ENCODE measurements at regions of chr3 and their contacts with region 1.

Region 1: GRCh38 chr3:159828542-159828943 is 160.1 kb upstream of the IL12A start:
- DNase-seq: peak; percentile 71
- H3K4me3 Mint-ChIP-seq: no peak overlapping the region
- H3K27ac Mint-ChIP-seq: peak overlapping the region; percentile 84
- H3K4me1 Mint-ChIP-seq: peaks cover 40% of the 10 kb centered on the region
- H3K27me3 Mint-ChIP-seq: no peaks in the 10 kb centered on the region
- CTCF ChIP-seq: peak; percentile 38

Region 2: GRCh38 chr3:159804726-159805410 is 23.7 kb before region 1 on chr3:
- CTCF ChIA-PET with region 1: interaction called, 19 read pairs
- POLR2A ChIA-PET with region 1: interaction called, 9 read pairs
- intact Hi-C with region 1: no loop called
- DNase-seq: peak; percentile 93
- H3K4me3 Mint-ChIP-seq: no peak overlapping the region
- H3K27ac Mint-ChIP-seq: no peak overlapping the region
- H3K4me1 Mint-ChIP-seq: peaks cover 32% of the 10 kb centered on the region
- H3K27me3 Mint-ChIP-seq: no peaks in the 10 kb centered on the region
- CTCF ChIP-seq: peak; percentile 91

Region 3: DNA sequence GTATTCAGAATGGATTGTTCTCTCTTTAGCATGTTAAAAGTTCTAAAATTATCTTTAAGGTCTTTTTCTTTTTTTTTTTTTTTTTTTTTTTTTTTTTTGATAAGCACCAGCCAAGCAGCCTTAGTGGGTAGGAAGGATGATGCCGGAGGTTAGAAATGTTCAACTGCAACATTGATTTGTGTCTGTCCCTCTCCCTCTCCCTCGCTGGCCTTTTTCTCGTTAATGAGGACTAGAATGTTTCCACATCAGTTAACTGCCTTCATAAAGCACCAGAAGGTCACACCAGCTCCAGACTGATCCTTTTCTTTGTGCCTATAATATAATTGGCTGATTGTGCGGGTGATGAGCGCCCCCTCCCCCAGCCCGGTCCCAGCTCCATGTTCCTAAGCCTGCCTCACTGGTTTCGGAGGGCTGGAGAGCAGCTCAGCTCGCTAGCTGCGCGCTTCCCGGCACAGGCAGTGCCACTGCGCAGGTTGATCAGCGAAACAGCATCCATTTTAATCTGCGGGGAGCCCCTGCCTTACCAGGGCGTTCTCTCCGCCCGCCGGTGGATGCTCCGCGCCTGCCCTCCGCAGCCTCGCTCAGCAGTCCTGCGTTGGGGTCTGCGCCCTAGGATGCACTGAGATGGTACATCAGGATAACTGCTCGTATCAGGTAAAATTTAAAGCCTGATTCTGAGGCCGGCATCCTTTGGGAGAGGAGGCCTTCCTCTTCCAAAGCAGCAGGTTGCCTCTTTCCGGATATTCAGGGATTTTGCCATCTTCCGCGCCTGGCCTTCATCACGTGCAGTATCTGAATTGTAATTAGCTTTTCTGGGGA is 11.2 kb after region 1 on chr3:
- CTCF ChIA-PET with region 1: interaction called, 34 read pairs
- POLR2A ChIA-PET with region 1: interaction called, 94 read pairs
- intact Hi-C with region 1: no loop called
- DNase-seq: no peak
- H3K4me3 Mint-ChIP-seq: peak within 1 kb of the TSS; percentile 66
- H3K27ac Mint-ChIP-seq: peak within 1 kb of the TSS; percentile 27
- H3K4me1 Mint-ChIP-seq: peaks cover 25% of the 10 kb centered on the region
- H3K27me3 Mint-ChIP-seq: no peaks in the 10 kb centered on the region
- CTCF ChIP-seq: no peak

Region 4: DNA sequence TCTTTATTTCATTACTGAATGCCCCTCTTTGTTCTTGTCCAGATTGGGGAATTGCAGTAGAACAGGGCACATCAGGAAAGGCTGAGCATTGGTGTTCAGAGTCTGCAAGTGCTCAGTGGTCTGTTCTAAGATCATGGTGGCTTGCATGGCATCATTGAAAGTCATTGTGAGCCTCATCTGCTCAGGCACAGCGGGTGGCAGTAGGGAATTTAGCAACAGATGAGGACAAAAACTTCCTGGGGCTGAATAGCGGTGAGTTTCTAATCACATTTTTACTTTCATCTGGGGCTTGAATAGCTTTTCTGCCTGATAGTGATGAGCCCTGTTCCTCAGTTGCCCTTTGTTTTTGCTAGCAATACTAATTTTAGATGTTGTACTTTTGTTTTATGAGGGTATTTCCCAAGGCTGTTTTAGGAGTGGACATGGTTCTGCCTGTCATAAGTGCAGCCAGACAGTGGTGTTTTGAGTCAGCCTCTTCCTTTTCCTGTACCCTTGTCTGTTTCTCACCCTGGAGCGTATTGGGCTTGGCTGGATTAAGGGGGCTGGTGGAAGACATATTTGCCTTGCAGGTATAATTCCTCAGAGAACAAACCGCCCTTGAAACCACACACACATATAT is 32.9 kb after region 1 on chr3:
- CTCF ChIA-PET with region 1: interaction called, 87 read pairs
- POLR2A ChIA-PET with region 1: interaction called, 13 read pairs
- intact Hi-C with region 1: no loop called
- DNase-seq: no peak
- H3K4me3 Mint-ChIP-seq: no peak overlapping the region
- H3K27ac Mint-ChIP-seq: peak overlapping the region; percentile 65
- H3K4me1 Mint-ChIP-seq: peaks cover 42% of the 10 kb centered on the region
- H3K27me3 Mint-ChIP-seq: no peaks in the 10 kb centered on the region
- CTCF ChIP-seq: no peak

Region 5: DNA sequence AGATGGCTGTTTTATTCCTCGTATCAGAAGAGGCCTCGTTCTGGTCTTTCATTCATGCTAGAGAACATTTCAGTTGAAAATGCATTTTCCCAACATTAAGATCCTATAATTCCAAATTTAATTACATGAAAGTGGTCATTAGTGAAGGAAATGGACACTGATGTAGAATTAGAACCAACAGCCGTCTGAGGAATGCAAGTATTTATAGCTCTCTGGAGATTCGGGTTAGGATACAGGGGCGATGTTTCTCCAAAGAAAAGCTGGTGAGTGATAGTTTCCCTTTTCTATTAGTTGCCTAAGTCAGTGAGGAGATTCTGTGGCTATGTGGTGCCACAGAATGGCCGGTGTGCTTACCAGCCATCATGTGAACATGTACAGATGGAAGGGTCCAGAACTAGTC is 51.1 kb after region 1 on chr3:
- CTCF ChIA-PET with region 1: interaction called, 168 read pairs
- POLR2A ChIA-PET with region 1: interaction called, 101 read pairs
- intact Hi-C with region 1: loop called (anchors 1 kb)
- DNase-seq: no peak
- H3K4me3 Mint-ChIP-seq: no peak overlapping the region
- H3K27ac Mint-ChIP-seq: no peak overlapping the region
- H3K4me1 Mint-ChIP-seq: peaks cover 34% of the 10 kb centered on the region
- H3K27me3 Mint-ChIP-seq: no peaks in the 10 kb centered on the region
- CTCF ChIP-seq: no peak

Region 6: DNA sequence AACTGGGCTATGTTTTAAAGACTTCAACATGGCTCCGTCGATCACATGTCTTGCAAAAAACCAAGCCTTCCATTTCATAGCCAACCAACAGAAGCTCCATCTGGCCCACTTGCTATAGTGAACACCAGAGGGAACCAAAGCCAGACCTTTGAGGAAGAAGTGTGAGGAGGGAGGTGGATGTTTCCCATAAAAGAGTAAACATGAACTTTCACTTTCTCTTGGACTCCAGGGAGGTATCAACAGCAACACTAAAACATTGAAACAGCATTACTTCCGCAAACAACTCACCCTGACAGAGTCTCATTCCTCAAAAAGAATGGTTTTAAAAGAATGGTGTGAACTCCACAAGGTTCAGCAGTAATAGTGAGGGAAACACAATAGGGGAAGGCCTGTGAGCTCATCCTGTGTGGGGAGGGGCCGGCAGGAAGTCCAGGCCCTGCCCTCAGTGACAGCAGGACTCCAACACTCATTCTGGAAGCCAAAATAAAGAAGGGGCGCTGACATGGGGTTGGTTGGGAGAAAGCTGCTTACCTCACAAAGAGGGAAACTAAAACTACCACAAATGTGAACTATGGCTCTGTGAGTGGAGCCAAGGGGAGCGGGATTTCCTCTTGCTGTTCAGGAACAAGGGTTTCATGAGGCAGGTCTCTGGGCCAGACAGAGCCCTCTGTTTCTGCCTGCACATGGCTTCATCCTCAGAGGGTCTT is 101.0 kb after region 1 on chr3:
- CTCF ChIA-PET with region 1: interaction called, 4 read pairs
- POLR2A ChIA-PET with region 1: interaction called, 8 read pairs
- intact Hi-C with region 1: loop called (anchors 1 kb)
- DNase-seq: peak; percentile 64
- H3K4me3 Mint-ChIP-seq: peak overlapping the region; percentile 33
- H3K27ac Mint-ChIP-seq: peak overlapping the region; percentile 24
- H3K4me1 Mint-ChIP-seq: peaks cover 16% of the 10 kb centered on the region
- H3K27me3 Mint-ChIP-seq: no peaks in the 10 kb centered on the region
- CTCF ChIP-seq: peak; percentile 24